Heart left ventricle (tissue), 16 donors: ENCODE measurements at regions of chr7 and their contacts with region 1.

Region 1: DNA sequence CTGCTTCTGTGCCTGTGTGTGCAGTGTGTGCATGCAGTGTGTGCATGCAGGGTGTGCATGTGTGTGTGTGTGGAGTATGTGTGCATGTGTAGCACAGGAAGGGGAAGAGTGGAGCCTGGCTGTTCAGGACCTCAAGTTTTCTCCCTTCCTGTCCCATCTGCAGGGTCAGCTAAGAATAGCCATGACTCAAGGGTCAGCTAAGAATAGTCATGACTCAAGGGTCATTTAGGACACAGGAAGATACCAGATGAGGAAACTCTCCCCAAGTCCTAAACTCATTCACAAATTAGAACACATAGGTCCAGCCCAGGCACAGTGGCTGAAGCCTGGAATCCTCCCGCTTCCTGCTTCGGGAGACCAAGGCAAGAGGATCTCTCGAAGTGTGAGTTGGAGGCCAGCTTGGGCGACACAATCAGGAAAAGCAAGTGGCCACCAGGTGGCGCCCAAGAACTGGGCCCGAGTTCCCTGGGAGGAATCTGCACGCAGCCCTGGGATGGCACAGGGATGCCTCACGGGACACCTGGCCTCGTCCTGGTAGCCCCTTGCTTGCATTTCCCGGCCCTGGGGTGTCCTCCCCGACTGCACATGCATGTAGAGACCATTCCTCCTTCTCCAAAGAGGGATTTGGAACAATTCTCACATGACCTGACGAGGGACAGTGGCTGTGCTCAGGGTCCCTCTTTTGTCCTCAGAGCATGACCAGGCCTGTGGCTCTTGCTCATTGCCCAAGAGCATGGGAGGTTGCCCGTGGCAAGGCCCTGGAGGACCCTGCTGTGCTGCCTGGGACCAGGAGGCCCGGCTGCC is 21.4 kb upstream of the VOPP1 start:
- DNase-seq: peak in 4 of 5 donors; percentile 52 to 84 (median 60)
- ATAC-seq: peak; percentile 28 to 87 (median 76)
- H3K4me3 ChIP-seq: no peak overlapping the region
- H3K27ac ChIP-seq: peak overlapping the region in 1 of 12 donors; percentile 24
- H3K4me1 ChIP-seq: peaks cover 0 to 13% (median 2%) of the 10 kb centered on the region in 12 donors
- H3K27me3 ChIP-seq: no peaks in the 10 kb centered on the region
- CTCF ChIP-seq: peak; percentile 48 to 76 (median 64)
- POLR2A ChIP-seq: no peak

Region 2: DNA sequence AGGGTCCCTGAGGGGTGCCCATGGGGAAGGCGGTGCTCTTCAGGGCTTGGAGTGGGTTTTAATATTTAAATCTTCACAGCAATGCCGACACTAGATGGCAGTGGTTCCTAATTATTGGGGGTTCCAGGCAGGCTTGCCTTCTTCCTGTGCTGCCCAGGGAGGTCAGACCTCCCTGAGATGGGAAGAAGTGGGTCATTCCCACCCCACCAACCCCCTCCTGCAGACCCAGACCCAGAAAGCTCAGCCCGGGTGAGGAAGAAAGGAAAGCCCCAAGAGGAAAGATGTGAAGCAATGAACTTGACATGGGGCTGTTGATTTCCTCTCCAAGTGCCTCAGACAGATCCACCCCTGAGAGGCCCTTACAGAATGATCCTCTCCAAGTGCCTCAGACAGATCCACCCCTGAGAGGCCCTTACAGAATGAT is 313.7 kb before region 1 on chr7:
- intact Hi-C with region 1: loop called in 4 of 10 experiments (anchors 5 to 10 kb)
- DNase-seq: peak in 4 of 5 donors; percentile 48 to 56 (median 50)
- ATAC-seq: peak; percentile 53 to 86 (median 80)
- H3K4me3 ChIP-seq: no peak overlapping the region
- H3K27ac ChIP-seq: no peak overlapping the region
- H3K4me1 ChIP-seq: no peaks in the 10 kb centered on the region
- H3K27me3 ChIP-seq: no peaks in the 10 kb centered on the region
- CTCF ChIP-seq: peak; percentile 33 to 73 (median 62)
- POLR2A ChIP-seq: no peak

Region 3: DNA sequence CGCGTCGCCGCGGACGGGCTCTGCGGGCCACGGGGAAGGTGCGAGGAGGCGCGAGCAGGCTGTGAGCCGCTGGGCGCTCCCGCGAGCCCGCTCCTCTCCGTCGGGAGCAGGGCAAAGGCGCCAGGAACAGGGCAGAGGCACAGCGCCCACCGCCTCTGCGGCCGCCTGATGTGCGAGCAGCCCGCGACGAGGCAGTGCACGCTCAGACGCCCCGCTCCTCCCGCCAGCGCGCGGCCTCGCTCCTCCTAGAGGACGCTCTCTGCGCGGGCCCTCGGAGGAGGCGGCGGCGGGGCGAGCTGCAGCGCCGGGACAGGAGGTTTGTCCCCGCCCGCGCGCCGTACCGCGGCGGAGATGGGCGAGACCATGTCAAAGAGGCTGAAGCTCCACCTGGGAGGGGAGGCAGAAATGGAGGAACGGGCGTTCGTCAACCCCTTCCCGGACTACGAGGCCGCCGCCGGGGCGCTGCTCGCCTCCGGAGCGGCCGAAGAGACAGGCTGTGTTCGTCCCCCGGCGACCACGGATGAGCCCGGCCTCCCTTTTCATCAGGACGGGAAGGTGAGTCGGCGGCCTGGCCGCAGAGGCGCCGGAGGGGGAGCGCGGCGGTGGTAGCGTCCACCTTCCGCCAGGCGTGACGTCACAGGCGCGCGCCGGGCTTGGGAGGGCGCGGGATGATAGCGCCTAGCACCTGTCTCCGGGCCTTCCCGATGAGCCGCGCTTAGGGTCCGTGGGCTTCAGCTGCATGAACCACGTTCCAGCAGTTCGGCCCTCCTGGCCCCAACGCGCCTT is 227.8 kb before region 1 on chr7:
- intact Hi-C with region 1: loop called in 1 of 10 experiments (anchors 10 kb)
- DNase-seq: peak; percentile 96 to 98 (median 97)
- ATAC-seq: peak; percentile 97 to 99 (median 99)
- H3K4me3 ChIP-seq: peak overlapping the region; percentile 73 to 100 (median 96)
- H3K27ac ChIP-seq: peak overlapping the region; percentile 95 to 100 (median 100)
- H3K4me1 ChIP-seq: peaks cover 0 to 21% (median 15%) of the 10 kb centered on the region in 12 donors
- H3K27me3 ChIP-seq: no peaks in the 10 kb centered on the region
- CTCF ChIP-seq: peak in 10 of 12 donors; percentile 5 to 52 (median 26)
- POLR2A ChIP-seq: peak in 1 of 2 donors; percentile 65

Region 4: DNA sequence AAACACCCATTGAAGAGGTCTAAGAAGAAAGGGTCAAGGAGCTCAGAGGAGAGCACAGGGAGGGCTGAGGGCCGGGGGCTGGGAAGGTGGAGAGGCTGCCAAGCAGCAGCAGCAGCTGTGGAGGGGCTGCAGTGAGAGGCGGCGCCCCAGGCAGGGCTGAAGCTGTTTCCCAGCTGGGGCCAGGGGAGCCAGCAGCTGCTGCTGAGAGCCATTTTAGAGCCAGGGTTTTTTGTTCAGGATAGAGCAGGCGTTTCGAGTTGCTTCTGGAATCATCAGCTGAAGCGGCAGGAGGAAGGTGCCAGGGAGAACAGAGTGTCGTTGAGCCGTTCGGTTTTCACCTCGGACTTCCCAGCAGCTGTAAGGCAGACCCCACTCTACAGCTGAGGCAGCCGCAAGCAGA is 165.9 kb before region 1 on chr7:
- intact Hi-C with region 1: loop called in 6 of 10 experiments (anchors 2 to 10 kb)
- DNase-seq: no peak
- ATAC-seq: peak in 1 of 4 donors; percentile 45
- H3K4me3 ChIP-seq: no peak overlapping the region
- H3K27ac ChIP-seq: no peak overlapping the region
- H3K4me1 ChIP-seq: no peaks in the 10 kb centered on the region
- H3K27me3 ChIP-seq: no peaks in the 10 kb centered on the region
- CTCF ChIP-seq: no peak
- POLR2A ChIP-seq: no peak

Region 5: GRCh38 chr7:55432939-55433784 is 160.6 kb before region 1 on chr7:
- intact Hi-C with region 1: loop called in 9 of 10 experiments (anchors 2 to 10 kb)
- DNase-seq: no peak
- ATAC-seq: peak; percentile 47 to 76 (median 66)
- H3K4me3 ChIP-seq: no peak overlapping the region
- H3K27ac ChIP-seq: no peak overlapping the region
- H3K4me1 ChIP-seq: no peaks in the 10 kb centered on the region
- H3K27me3 ChIP-seq: no peaks in the 10 kb centered on the region
- CTCF ChIP-seq: peak; percentile 26 to 59 (median 46)
- POLR2A ChIP-seq: no peak

Region 6: DNA sequence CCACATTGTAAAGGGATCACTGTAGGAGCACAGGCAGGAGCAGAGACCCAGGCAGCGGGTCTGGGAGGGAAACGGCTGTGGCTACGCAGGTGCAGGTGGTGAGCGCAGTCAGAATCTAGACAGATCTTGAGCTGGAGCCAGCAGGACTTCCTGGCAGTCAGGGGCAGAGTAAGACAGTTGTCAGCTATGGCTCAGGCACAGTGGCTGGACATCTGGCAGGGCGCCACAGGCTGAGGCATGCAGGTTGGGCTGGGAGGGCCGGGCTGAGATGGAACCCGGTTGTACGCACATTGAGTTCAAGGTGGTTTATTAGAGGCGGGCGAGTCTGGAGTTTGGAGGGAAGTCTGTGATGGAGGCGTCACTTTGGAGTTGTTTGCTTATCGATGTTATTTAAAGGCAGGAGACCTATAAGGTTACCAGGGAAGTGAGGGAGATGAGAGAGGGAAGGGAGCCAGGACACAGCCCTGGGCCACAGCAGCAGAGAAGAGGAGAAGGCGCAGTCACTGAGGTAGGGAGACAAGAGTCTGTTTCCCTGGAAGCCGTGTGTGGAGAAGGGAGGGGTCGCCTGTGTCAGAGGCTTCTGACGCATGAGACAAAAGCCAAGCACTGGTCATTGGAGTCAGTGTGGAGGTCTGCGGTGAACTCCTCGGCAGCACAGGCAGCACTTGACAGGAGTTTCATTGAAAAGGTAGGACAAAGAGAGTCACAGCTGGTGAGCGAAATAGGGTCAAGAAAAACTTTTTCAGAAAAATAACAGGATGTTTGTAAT is 154.8 kb before region 1 on chr7:
- intact Hi-C with region 1: loop called in 7 of 10 experiments (anchors 2 to 10 kb)
- DNase-seq: peak in 4 of 5 donors; percentile 48 to 82 (median 68)
- ATAC-seq: peak; percentile 50 to 79 (median 58)
- H3K4me3 ChIP-seq: no peak overlapping the region
- H3K27ac ChIP-seq: no peak overlapping the region
- H3K4me1 ChIP-seq: peaks cover 0 to 36% (median 12%) of the 10 kb centered on the region in 12 donors
- H3K27me3 ChIP-seq: no peaks in the 10 kb centered on the region
- CTCF ChIP-seq: no peak
- POLR2A ChIP-seq: no peak

Region 7: GRCh38 chr7:55534175-55534915 is 59.4 kb before region 1 on chr7:
- intact Hi-C with region 1: no loop called
- DNase-seq: peak in 3 of 5 donors; percentile 37 to 67 (median 65)
- ATAC-seq: peak; percentile 66 to 77 (median 74)
- H3K4me3 ChIP-seq: peak overlapping the region in 1 of 12 donors; percentile 7
- H3K27ac ChIP-seq: peak overlapping the region in 3 of 12 donors; percentile 11 to 88 (median 28)
- H3K4me1 ChIP-seq: peaks cover 0 to 85% (median 38%) of the 10 kb centered on the region in 12 donors
- H3K27me3 ChIP-seq: no peaks in the 10 kb centered on the region
- CTCF ChIP-seq: no peak
- POLR2A ChIP-seq: no peak

Region 8: GRCh38 chr7:55572378-55573233 is 21.1 kb before region 1 on chr7 and contains the start of gene VOPP1:
- intact Hi-C with region 1: no loop called
- DNase-seq: peak; percentile 69 to 87 (median 77)
- ATAC-seq: peak; percentile 74 to 90 (median 87)
- H3K4me3 ChIP-seq: peak within 1 kb of the TSS; percentile 80 to 99 (median 97)
- H3K27ac ChIP-seq: peak within 1 kb of the TSS; percentile 64 to 96 (median 90)
- H3K4me1 ChIP-seq: peaks cover 6 to 61% (median 47%) of the 10 kb centered on the region in 12 donors
- H3K27me3 ChIP-seq: no peaks in the 10 kb centered on the region
- CTCF ChIP-seq: no peak
- POLR2A ChIP-seq: peak in 1 of 2 donors; percentile 13
- total RNA-seq, gene VOPP1: 20.3 to 58.0 (median 26.8) TPM